Posterior vena cava (tissue), 2 donors: ENCODE measurements at regions of chr12 and their contacts with region 1.

Region 1: GRCh38 chr12:8226355-8226754 is 1.1 kb downstream of the FAM90A1 start:
- DNase-seq: peak; percentile 62

Region 2: DNA sequence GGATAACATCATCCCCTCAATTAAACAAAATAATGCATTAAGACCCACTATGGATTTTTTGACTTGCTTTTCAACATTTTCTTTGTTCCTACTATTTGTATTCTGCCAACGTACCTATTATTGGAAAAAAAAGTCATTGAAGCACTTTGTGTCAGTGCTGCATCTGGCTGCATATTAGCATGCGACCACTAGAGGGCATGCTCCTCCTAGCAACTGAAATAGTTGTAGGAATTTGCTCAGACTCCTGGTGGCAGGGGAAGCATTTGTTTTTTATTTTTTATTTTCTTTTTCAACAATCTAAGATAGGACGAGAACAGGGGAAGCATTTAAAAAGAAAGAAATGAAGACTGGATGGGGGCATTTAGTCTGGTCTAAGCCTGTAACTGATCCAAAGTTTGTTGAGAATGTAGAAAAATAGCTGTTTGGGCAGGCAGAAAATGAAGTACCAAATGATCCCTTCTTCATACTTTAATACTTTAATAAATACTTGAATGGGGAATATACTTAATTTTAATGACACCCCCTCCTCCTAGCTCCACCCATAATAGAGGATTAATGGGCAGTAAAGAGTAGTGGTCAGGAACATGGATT is 117.5 kb before region 1 on chr12:
- intact Hi-C with region 1: loop called (anchors 10 kb)
- DNase-seq: peak; percentile 88